Activated CD8-positive, alpha-beta T cell treated with anti-CD3 and anti-CD28 coated beads for 36 hours (primary cell): ENCODE measurements at regions of chr3 and their contacts with region 1.

Region 1: DNA sequence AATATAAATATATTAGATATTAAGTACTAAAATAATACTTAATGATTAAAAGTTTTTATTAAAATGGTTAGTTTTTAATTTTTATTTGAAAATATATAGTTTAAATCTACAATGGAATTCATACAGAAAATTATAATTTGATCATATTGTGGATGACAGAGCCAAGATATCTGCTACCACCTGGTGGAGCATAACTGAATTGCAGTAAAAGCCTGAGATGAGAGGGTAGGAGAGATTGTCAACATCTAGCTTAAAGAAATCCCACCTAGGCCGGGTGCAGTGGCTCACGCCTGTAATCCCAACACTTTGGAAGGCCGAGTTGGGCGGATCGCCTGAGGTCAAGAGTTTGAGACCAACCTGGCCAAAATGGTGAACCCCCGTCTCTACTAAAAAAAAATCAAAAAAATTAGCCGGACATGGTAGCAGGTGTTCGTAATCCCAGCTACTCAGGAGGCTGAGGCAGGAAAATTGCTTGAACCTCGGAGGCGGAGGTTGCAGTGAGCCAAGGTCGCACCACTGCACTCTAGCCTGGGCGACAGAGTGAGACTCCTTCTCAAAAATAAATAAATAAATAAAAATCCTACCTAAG is 25.1 kb upstream of the CSTA start:
- DNase-seq: peak; percentile 54
- ATAC-seq: peak; percentile 69
- H3K4me3 Mint-ChIP-seq: no peak overlapping the region
- H3K27ac Mint-ChIP-seq: no peak overlapping the region
- H3K4me1 Mint-ChIP-seq: peaks cover 20% of the 10 kb centered on the region
- H3K27me3 Mint-ChIP-seq: no peaks in the 10 kb centered on the region
- CTCF ChIP-seq: peak; percentile 79

Region 2: DNA sequence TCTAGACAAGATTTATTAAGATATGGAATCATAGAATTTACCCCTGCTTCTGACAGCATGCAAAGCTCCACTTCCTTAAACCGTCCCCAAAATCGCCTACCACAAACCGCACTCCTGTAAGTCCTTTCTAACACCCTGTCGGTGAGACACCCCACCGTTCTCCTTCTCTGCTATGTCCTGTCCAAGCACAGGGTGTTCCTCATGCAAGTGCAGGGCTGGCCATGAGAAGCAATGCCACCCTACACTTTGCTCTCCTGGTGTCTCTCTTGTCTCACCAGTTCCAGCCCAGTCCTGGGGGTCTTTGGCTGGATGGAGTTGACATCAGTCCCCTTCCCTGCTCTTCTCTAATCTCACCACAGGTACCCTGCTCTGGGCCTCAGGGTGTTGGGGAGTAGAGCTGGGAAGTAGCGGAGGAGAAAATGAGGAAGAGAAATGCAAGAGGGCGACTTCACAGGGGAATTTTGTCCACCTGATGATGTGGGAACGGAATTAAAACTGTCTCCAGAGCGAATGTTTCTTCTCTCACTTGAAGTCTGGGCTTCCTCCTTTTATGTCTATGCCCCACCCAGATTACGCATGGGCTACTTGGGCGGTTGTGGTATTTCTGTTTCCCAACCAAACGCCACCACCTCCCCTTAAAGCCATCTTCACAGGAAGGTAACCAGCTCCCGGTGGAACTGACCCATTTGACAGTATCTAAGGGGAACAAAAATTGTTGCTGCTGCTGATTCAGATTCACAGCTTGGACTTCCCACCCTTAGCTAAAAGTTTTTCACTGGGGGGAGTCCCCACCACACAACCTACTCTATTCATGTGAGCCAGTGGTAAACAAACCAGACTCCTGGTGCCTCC is 66.6 kb before region 1 on chr3:
- CTCF ChIA-PET with region 1: interaction called, 12 read pairs
- POLR2A ChIA-PET with region 1: no interaction called
- intact Hi-C with region 1: no loop called
- DNase-seq: peak; percentile 47
- ATAC-seq: peak; percentile 67
- H3K4me3 Mint-ChIP-seq: no peak overlapping the region
- H3K27ac Mint-ChIP-seq: peak overlapping the region; percentile 5
- H3K4me1 Mint-ChIP-seq: peaks cover 22% of the 10 kb centered on the region
- H3K27me3 Mint-ChIP-seq: peaks cover 10% of the 10 kb centered on the region
- CTCF ChIP-seq: no peak

Region 3: DNA sequence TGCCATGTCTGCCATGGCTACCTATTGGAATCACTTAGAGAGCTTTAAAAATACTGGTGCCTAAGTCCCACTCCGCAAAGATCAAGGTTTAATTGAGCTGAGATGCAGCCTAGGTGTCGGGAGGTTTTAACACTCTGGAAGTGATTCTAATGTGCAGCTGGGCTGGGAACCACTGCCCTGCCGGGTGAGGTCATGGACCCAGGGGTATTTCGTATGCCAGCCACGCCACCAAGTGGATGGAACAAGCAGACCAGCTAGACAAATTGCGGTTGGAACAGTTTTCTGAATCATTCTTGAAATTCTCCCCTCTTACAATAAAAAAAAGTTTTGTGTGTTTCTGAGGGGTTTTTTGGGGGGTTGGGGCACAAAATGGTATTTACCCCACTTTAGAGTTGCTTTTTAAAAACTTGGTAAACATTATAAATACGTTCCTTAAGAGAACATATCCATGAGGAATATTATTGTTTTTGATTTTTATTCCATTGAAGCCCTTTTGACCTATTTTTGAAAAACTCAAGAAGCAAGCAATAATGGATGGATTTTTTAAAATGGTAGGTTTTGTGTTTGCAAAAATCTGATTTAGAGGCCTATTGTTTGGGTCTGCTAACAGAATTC is 41.1 kb before region 1 on chr3:
- CTCF ChIA-PET with region 1: interaction called, 9 read pairs
- POLR2A ChIA-PET with region 1: no interaction called
- intact Hi-C with region 1: loop called (anchors 5 kb)
- DNase-seq: peak; percentile 86
- ATAC-seq: peak; percentile 91
- H3K4me3 Mint-ChIP-seq: no peak overlapping the region
- H3K27ac Mint-ChIP-seq: peak overlapping the region; percentile 43
- H3K4me1 Mint-ChIP-seq: peaks cover 21% of the 10 kb centered on the region
- H3K27me3 Mint-ChIP-seq: peaks cover 3% of the 10 kb centered on the region
- CTCF ChIP-seq: peak; percentile 71

Region 4: GRCh38 chr3:122283796-122284445 is 16.0 kb before region 1 on chr3:
- CTCF ChIA-PET with region 1: interaction called, 11 read pairs
- POLR2A ChIA-PET with region 1: no interaction called
- intact Hi-C with region 1: no loop called
- DNase-seq: no peak
- ATAC-seq: no peak
- H3K4me3 Mint-ChIP-seq: no peak overlapping the region
- H3K27ac Mint-ChIP-seq: no peak overlapping the region
- H3K4me1 Mint-ChIP-seq: no peaks in the 10 kb centered on the region
- H3K27me3 Mint-ChIP-seq: no peaks in the 10 kb centered on the region
- CTCF ChIP-seq: no peak

Region 5: GRCh38 chr3:122322095-122323075 is 22.4 kb after region 1 on chr3:
- CTCF ChIA-PET with region 1: interaction called, 10 read pairs
- POLR2A ChIA-PET with region 1: no interaction called
- intact Hi-C with region 1: no loop called
- DNase-seq: peak; percentile 68
- ATAC-seq: peak; percentile 95
- H3K4me3 Mint-ChIP-seq: no peak overlapping the region
- H3K27ac Mint-ChIP-seq: no peak overlapping the region
- H3K4me1 Mint-ChIP-seq: peaks cover 18% of the 10 kb centered on the region
- H3K27me3 Mint-ChIP-seq: no peaks in the 10 kb centered on the region
- CTCF ChIP-seq: no peak